Activated T-helper 1 cell treated with anti-CD3 and anti-CD28 coated beads, Interleukin-12 subunit alpha, Interleukin-12 subunit beta, Interleukin-2, Interleukin-4 antibody, amounts not matched to agents 30 ng/mL and 10 ng/mL and 1 ng/mL, durations not matched to agents 14 hours and 24 hours and 36 hours (primary cell): ENCODE measurements at regions of chr1 and their contacts with region 1.

Region 1: DNA sequence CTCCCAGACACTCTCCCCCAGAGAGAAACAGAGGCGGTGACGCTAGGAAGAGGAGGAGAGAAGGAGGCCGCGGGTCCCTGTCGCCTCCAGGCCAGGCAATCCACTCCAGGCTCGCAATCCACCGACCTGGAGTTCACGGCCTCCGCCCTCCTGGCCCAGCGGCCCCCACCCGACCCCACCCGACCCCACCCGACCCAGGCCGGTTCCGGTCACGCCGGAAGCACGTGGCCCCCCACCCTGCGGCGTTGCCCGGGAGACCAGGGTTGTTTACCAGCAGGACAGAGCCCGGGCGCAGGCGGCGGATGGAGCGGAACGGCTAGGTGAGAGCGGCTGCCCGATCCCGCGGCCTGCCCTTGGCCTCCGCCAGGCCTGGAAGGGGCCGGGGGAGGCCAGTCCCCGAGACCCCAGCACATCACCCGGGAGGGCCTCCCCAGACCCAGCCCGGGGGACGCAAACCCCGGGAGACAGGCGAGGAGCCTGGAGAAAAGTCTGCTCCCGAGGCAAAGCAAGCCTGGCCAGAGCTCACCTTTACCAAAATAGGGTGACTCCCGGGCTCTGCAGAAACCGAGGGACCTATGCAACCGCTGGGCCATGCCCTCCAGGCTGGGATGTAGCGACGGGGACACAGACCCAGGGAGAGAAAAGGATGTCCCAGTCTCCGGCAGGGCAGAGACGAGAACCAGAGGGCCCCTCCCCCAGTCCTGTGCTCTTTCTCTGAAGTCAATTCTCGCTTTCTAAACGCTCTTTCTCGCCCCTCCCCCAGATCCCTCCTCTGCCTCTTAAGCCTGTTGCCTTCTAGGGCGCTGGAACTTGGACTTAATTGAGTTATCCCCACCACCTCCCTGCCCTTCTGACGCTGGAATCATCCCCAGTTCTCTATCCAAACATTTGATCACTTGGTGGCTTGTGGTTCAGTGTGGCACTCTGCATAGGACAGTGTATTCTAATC is at the starts of genes PLA2G2C and UBXN10:
- DNase-seq: peak; percentile 64
- H3K4me3 Mint-ChIP-seq: peak within 1 kb of the TSS; percentile 86
- H3K27ac Mint-ChIP-seq: peak within 1 kb of the TSS; percentile 90
- H3K4me1 Mint-ChIP-seq: peaks cover 63% of the 10 kb centered on the region
- H3K27me3 Mint-ChIP-seq: peaks cover 11% of the 10 kb centered on the region
- total RNA-seq, gene PLA2G2C: 0.44 and 0.65 TPM in 2 replicates
- total RNA-seq, gene UBXN10: 2.5 and 2.9 TPM in 2 replicates

Region 2: DNA sequence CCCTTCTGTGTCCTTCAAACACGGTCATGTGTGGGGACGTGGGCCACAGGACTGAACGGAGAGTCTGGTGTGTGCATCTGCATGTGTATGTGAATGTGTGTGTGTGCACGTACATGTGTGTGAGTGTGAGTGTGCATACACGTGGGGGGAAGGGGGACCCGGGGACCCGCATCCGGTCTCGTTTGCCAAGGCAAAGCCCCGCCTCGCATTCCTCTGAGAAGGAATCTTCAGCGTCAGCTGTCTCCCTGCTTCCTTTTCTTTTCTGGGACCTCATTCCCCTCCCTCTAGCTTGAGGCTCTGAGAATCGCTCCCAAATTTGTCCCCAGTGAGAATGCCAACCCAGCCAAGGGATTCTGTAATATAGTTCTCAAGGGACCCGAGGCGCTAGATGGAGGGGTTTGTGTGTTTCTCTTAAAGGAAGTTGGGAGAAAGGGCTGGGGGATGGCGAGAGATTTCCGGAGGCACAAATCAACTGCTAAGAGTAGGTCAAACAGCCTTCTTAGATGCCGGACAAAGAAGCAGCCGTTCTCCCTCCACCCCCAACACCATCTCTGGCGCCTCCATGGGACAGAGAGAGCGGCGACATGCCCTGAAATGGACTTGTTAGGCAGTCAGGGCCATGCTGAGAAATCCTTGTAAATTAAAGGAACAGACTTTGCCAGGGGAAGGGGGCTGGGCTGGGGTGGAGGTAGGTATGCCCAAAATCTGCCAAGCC is 1236.3 kb before region 1 on chr1:
- intact Hi-C with region 1: loop called (anchors 5 kb)
- DNase-seq: no peak
- H3K4me3 Mint-ChIP-seq: peak overlapping the region; percentile 89
- H3K27ac Mint-ChIP-seq: peak overlapping the region; percentile 99
- H3K4me1 Mint-ChIP-seq: peaks cover 95% of the 10 kb centered on the region
- H3K27me3 Mint-ChIP-seq: peaks cover 2% of the 10 kb centered on the region

Region 3: DNA sequence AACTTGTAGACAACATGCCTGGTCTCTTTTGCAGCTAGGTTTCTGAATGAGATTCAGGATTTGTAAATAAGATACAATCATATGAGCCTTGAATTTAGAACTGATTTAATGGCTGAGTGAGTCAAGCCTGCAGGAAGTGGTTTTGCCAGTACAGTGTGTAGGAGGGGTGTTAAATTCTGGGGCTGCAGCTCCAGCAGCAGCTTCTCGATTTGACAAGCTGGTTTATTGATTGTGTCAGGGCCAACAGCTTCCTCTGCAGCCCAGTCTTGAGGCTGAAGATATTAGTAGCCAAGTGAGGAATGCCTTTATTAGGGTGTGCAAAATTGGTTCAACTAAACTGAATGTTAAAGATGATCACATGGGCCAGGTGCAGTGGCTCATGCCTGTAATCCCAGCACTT is 127.6 kb before region 1 on chr1:
- intact Hi-C with region 1: loop called (anchors 1 kb)
- DNase-seq: peak; percentile 25
- H3K4me3 Mint-ChIP-seq: peak overlapping the region; percentile 2
- H3K27ac Mint-ChIP-seq: peak overlapping the region; percentile 13
- H3K4me1 Mint-ChIP-seq: peaks cover 24% of the 10 kb centered on the region
- H3K27me3 Mint-ChIP-seq: peaks cover 17% of the 10 kb centered on the region

Region 4: GRCh38 chr1:20174937-20175666 is 11.0 kb before region 1 on chr1:
- intact Hi-C with region 1: loop called (anchors 1 kb)
- DNase-seq: no peak
- H3K4me3 Mint-ChIP-seq: peak overlapping the region; percentile 16
- H3K27ac Mint-ChIP-seq: peak overlapping the region; percentile 41
- H3K4me1 Mint-ChIP-seq: peaks cover 44% of the 10 kb centered on the region
- H3K27me3 Mint-ChIP-seq: peaks cover 2% of the 10 kb centered on the region

Region 5: GRCh38 chr1:20633190-20634064 is 447.3 kb after region 1 on chr1 and contains the start of gene PINK1:
- intact Hi-C with region 1: loop called (anchors 1 kb)
- DNase-seq: peak; percentile 85
- H3K4me3 Mint-ChIP-seq: peak within 1 kb of the TSS; percentile 83
- H3K27ac Mint-ChIP-seq: peak within 1 kb of the TSS; percentile 48
- H3K4me1 Mint-ChIP-seq: peaks cover 10% of the 10 kb centered on the region
- H3K27me3 Mint-ChIP-seq: peaks cover 1% of the 10 kb centered on the region
- total RNA-seq, gene PINK1: 2.6 and 3.3 TPM in 2 replicates